GM10248 (cell line): ENCODE measurements at regions of chr5 and their contacts with region 1.

Region 1: DNA sequence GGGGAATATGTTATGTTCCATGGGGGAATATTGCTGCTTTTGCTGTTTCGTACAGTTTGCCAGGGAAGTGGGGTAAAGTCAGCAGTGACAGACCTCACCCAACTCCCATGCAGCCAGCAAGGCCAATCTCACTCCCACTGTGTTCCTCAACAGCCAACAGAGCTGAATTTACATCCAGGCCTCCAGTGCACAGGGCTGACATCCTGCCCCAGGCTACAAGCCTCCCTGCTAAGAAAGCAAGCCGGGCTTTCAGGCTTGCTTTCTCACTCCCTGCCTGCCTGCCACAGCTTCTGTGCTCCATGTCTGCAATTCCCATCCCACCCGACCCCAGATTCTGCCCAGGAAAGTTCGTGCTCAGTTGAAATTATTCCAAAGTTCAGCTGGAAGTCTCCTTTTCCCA is 25.5 kb upstream of the SNCAIP start:
- DNase-seq: no peak
- CTCF ChIP-seq: no peak

Region 2: DNA sequence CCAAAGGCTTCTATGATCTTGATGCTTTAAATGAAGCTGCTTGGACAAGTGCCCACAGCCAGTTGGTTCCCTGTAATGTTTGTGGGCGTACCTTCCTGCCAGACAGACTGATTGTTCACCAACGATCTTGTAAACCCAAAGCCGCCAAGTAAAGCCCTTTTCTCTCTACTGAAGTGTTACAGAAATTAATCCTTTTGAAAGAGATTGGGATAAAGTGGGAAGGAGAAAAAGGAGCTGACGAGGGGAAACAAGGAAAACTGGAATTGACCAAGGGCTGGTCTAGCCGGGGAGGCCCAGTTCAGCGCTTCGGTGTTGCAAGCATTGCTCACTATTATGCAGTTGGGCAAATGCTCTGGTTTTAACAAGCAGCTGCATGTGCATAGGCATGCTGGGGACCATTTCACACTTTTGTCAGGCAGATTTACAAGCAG is 104.0 kb before region 1 on chr5:
- CTCF ChIA-PET with region 1: no interaction called
- POLR2A ChIA-PET with region 1: no interaction called
- DNase-seq: no peak
- CTCF ChIP-seq: no peak

Region 3: DNA sequence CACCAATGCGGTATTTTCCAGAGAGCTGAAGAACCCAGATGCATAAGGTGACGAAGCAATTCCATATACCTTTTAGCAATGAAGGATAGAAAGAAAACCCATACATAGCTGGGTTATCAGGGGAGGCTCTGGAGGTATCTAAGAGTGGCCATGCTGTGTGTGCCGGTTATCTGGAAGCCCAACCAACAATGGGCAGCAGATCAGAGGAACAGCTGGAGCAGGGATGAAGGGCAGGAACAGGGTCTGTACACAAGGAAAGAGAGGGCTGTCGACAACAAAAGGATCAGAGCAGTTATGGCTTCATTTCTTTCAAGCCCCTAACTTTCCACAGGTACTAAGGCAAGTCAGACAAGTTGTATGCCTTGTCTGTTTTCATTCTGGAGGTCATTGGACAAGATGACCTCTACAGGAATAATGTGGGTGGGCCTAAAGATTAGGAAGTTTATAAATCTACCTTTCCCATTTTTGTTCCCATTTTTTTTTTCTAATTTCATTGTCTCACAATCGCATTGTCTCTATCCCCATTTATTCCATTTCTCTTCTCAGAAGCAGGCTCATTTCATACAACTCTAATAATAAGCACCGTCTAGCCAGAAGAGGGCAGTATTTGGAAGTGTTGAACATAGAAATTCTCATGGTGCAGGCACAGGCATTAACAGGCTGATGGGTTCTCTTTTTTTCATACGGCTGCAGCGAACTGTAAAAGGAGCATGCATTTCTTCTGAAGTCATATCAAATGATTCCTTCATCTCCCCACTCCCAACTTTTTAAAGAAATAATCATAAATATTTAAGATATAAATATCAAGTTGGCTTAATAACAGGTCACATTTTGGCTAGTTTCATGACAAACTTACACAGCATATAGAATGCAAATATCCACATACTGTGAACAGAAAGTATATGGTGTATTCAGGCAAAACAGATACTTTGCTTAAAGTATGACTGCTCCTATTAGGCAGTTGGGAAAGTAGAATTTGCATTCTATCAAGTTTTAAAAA is 93.7 kb before region 1 on chr5:
- CTCF ChIA-PET with region 1: no interaction called
- POLR2A ChIA-PET with region 1: no interaction called
- DNase-seq: peak; percentile 26
- CTCF ChIP-seq: peak; percentile 71

Region 4: GRCh38 chr5:122273696-122274095 is 12.8 kb before region 1 on chr5:
- CTCF ChIA-PET with region 1: interaction called, 11 read pairs
- POLR2A ChIA-PET with region 1: no interaction called
- DNase-seq: no peak
- CTCF ChIP-seq: no peak

Region 5: DNA sequence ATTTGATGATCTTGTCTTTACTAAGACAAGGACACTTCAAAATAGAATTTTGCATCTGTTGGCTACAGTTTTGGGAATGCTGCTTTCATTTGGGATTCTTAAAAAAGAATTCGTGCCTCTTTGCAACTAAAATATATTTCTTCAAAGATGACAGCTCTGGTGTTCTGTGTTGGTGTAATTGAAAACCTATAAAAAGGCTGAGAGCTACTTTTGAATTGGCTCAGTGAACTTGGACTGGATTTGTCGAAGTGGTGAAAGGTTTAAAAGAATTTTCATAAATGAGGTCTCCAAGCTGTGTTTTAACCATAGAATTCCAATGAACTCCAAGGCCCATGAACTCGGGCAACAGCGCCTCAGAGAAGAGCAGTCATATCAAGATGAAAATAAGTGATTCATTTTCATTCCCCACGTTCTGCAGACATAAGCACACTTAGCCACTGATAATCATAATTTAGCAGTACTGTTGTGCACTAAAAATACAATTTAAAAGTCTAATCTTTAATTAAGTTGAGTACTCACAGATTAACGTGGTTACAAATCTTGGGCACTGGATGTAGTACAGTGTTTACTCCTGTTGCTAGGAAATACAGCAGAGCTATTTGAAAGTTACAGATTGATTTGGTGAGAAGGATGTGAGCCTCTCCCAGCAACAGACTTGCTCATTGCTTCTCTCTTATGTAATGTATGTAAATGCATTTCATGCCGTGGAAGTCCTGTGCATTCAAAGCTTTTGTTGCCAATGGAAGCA is 36.4 kb after region 1 on chr5:
- CTCF ChIA-PET with region 1: no interaction called
- POLR2A ChIA-PET with region 1: no interaction called
- DNase-seq: no peak
- CTCF ChIP-seq: no peak